ENCODE measurements at regions of chr15 and their contacts with region 1.

Region 1: DNA sequence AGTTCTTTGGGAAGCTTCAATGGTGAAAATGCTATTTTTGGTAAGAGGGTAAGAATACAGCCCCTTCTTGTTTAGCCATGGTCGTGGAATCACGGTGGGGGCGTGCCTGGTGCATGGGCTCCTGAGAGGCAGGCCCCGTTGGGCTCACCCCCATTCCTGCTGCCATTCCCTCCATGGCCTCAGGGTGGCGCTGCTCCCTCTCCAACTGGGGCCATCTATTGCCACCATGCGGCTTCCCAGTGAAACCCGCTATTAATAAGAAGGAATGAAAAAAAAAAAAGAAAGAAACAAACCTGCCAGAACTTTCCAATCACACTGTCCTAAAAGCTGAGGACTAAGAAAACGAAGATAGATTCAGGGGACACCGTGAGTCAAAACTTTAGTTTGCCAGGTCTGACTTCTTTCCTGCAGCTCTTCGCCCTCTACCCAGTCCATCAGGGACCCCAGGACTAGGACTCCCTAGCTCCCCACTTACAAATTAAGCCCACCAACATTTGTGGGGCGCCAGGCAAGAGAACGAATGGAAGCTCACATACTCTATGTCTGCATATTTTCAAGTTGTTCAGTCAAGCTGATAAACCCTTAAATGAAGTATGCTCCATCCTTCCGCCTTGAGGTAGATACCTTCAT is 30.6 kb upstream of the ABHD2 start:
- DNase-seq: peak; percentile 15
- ATAC-seq: peak; percentile 99
- H3K4me3 ChIP-seq: no peak overlapping the region
- H3K27ac ChIP-seq: no peak overlapping the region
- H3K4me1 ChIP-seq: no peaks in the 10 kb centered on the region
- H3K27me3 ChIP-seq: no peaks in the 10 kb centered on the region; a peak in 1 of 4 replicates
- CTCF ChIP-seq: peak; percentile 97 to 99 (median 99)
- EP300 ChIP-seq: no peak
- POLR2A ChIP-seq: no peak
- RAD21 ChIP-seq: peak; percentile 98

Region 2: GRCh38 chr15:88605189-88606069 is 452.2 kb before region 1 on chr15:
- CTCF ChIA-PET with region 1: no interaction called
- POLR2A ChIA-PET with region 1: no interaction called
- RAD21 ChIA-PET with region 1: no interaction called
- SMC1A ChIA-PET with region 1: no interaction called
- in situ Hi-C with region 1: no loop called
- intact Hi-C with region 1: no loop called
- DNase-seq: no peak
- ATAC-seq: peak; percentile 70
- H3K4me3 ChIP-seq: no peak overlapping the region
- H3K27ac ChIP-seq: no peak overlapping the region
- H3K4me1 ChIP-seq: no peaks in the 10 kb centered on the region
- H3K27me3 ChIP-seq: peaks cover 17 to 20% of the 10 kb centered on the region in 2 experiments
- CTCF ChIP-seq: no peak
- EP300 ChIP-seq: no peak
- POLR2A ChIP-seq: no peak
- RAD21 ChIP-seq: no peak

Region 3: DNA sequence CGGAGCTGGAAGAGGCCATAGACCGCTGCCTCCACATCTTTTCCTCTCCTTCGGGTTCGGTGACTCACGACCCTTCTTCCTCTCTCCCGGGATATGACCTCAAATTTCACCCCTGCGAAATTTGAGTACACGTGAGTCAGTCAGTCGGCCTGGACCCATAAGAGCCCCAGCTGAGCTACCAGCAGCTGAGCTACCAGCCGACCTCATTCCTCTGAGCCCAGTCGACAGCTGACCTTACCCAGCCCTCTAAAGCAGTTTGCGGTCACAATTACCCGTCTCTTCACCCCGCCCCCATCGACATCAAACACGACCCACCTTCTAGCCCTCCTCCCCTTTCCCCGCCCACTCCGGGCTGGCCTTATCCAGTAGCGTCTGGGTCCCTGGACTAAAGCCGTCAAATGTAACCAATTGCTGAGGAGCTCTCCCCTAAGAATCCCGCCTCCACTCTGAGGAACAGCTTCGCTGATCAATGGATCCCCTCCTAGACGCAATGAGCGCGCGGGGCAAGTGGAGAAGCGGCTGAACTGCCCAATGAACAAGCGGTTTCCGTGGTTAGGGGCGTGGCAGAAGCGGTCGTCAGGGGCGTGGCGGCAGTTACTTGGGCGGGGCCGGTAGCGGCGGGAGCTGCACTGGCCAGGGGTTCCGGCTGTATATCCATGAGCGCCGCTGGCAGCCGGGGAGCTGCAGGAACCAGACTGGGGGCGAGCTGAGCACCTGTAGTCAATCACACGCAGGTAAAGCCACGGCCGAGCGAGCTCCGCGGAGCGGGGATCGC is 30.4 kb after region 1 on chr15 and contains the start of gene ABHD2:
- CTCF ChIA-PET with region 1: interaction called, 61 read pairs
- POLR2A ChIA-PET with region 1: no interaction called
- RAD21 ChIA-PET with region 1: interaction called, 13 read pairs
- SMC1A ChIA-PET with region 1: interaction called, 15 read pairs
- in situ Hi-C with region 1: no loop called
- intact Hi-C with region 1: no loop called
- DNase-seq: peak; percentile 99
- ATAC-seq: peak; percentile 96
- H3K4me3 ChIP-seq: peak within 1 kb of the TSS; percentile 88
- H3K27ac ChIP-seq: peak within 1 kb of the TSS; percentile 56
- H3K4me1 ChIP-seq: no peaks in the 10 kb centered on the region; the same call in 1 of the 2 replicates
- H3K27me3 ChIP-seq: no peaks in the 10 kb centered on the region
- CTCF ChIP-seq: no peak
- EP300 ChIP-seq: 0 out of 4 replicates have a peak, but pooled peaks of 1 of the 2 experiments have one; percentile 28
- POLR2A ChIP-seq: peak; percentile 84
- RAD21 ChIP-seq: no peak
- polyA plus RNA-seq, gene ABHD2: 1.2 to 4.7 TPM

Region 4: DNA sequence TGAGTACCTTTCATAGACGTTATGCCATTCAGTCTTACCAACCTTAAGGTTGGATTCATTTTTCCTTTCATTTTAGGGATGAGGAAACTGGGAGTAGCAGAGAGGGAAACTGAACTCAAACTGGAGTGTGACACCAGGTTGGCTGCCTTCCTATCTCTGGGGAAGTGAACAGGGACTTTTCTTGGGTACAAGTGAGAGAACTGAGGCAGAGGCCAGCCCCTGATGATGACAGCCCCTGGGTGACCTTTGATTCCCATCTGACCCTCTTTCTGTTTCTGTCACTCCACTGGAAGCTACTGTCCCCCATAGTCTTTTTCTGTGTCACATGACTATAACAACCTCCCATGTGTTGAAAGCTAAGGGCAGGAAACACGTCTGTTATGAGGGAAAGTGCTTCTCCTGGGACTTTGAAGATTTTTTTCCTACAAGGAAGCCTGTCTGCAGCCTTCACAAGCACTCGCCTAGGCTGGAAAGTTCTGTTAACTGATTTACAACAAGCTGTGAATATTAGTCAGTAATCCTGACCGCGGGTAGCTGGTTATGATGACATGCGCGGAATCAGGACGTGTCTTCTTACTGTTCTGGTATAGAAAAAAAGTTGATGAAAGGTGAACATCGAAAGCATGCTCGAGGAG is 62.0 kb after region 1 on chr15:
- CTCF ChIA-PET with region 1: interaction called, 11 read pairs
- POLR2A ChIA-PET with region 1: interaction called, 8 read pairs
- RAD21 ChIA-PET with region 1: interaction called, 5 read pairs
- SMC1A ChIA-PET with region 1: interaction called, 10 read pairs
- in situ Hi-C with region 1: no loop called
- intact Hi-C with region 1: loop called (anchors 5 kb)
- DNase-seq: no peak
- ATAC-seq: no peak
- H3K4me3 ChIP-seq: no peak overlapping the region
- H3K27ac ChIP-seq: no peak overlapping the region
- H3K4me1 ChIP-seq: no peaks in the 10 kb centered on the region
- H3K27me3 ChIP-seq: no peaks in the 10 kb centered on the region
- CTCF ChIP-seq: no peak
- EP300 ChIP-seq: no peak
- POLR2A ChIP-seq: no peak
- RAD21 ChIP-seq: no peak

Region 5: DNA sequence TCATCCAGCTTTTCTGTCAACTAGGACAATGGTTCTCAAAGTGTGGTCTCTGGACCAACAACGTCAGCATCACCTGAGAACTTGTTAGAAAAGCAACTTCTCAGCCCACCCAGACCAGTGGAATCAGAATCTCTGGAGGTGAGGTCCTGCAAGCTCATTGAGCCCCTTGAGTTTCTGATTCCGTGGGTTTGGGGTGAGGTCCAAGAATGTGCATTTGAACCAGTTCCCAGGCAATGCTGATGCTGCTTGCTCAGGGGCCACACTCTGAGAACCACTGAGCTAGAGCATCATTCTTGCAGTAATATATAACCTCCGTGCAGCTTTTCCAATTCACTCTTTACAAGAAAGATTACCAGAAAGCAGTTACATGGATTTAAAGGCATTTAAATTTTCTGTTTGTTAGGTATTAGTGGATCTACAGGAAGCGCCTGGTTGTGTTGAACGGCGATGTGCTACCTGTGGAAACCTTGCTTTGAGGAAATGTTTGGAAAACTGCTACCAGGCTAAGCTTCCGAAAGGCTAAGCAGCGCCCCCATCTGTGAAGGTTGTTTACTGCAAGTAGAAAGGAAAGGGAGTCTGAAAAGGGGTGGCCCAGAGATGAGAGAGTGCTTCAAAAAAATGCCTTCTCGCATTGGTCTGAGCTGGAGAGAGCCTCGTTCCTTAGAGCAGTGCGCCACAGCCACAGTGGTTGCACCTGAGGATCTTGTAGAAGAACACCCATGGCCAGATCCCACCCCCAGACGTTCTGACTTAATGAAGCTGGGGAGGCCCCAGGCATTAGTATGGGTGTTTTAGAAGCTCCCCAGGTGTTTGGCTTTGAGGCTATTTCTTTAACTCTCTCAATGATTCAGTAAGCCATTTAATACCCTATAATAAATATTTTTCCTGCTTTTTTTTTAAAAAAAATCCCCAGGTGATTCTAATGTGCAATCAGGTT is 113.8 kb after region 1 on chr15:
- CTCF ChIA-PET with region 1: interaction called, 339 read pairs
- POLR2A ChIA-PET with region 1: no interaction called
- RAD21 ChIA-PET with region 1: interaction called, 62 read pairs
- SMC1A ChIA-PET with region 1: interaction called, 61 read pairs
- in situ Hi-C with region 1: loop called (anchors 5 kb)
- intact Hi-C with region 1: no loop called
- DNase-seq: no peak
- ATAC-seq: peak; percentile 22; the same call in 1 of the 3 replicates
- H3K4me3 ChIP-seq: no peak overlapping the region
- H3K27ac ChIP-seq: no peak overlapping the region
- H3K4me1 ChIP-seq: peaks cover 18% of the 10 kb centered on the region
- H3K27me3 ChIP-seq: no peaks in the 10 kb centered on the region
- CTCF ChIP-seq: peak; percentile 54 to 68 (median 64)
- EP300 ChIP-seq: no peak
- POLR2A ChIP-seq: no peak
- RAD21 ChIP-seq: peak; percentile 53